H1 (cell line): ENCODE measurements at regions of chr5 and their contacts with region 1.

Region 1: DNA sequence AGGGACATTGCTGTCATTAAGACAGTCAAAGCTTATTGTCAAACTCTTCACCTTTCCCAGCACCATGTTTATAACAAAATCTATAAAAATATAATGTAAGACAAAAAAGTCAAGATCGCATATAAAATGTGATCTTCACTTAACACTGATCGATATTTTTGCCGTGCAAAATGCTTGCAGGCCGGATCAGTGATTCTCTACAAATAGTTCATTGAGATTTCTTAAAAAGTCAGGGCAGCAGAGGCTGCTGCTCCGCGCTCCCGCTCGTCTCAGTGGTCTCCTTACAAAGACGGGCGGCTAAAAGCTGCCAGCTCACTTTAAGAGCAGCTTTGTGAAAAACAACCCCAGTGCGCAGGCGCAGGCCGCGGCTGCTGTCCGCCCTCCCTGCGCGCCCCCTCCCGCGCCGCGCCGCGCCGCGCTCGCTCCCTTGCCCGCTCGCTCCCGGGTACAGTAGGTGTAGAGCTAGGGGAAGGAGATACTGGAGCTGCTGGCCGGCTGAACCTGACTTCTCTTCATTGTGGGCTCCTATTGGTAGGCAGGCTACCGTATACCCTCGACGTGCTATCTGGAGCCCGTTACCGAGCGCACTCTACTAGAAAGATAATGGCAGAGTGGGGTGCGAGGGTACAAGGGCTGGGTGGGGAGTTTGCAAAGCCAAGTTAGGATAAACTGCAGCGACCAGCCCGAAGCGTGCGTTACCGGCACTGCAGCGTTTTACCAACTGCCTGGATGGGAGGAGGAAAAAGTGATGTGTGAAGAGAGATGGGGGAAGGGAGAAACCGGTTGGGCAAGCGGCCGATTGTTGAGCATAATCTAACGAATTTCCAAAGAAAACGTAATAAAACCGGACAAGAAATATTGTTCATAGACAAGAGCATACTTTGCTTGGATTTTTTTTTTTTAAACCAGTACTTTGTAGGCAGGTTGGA is at the start of gene ARRDC3:
- DNase-seq: peak; percentile 90 to 97
- H3K4me3 ChIP-seq: peak within 1 kb of the TSS; percentile 85 to 94 (median 90)
- H3K27ac ChIP-seq: peak within 1 kb of the TSS; percentile 93
- H3K4me1 ChIP-seq: no peaks in the 10 kb centered on the region; a peak in 2 of 7 replicates
- H3K27me3 ChIP-seq: no peaks in the 10 kb centered on the region
- CTCF ChIP-seq: 0 out of 4 replicates have a peak, but pooled peaks of 1 of the 3 experiments have one; percentile 9
- EP300 ChIP-seq: peak in 1 of 2 experiments; percentile 3; a peak in 1 of 3 replicates
- POLR2A ChIP-seq: peak; percentile 92 to 98
- RAD21 ChIP-seq: peak in 1 of 2 experiments; percentile 15; a peak in 1 of 4 replicates
- total RNA-seq, gene ARRDC3: 5.4 and 5.7 TPM in 2 replicates

Region 2: GRCh38 chr5:90932052-90932699 is 451.1 kb before region 1 on chr5:
- CTCF ChIA-PET with region 1: interaction called, 20 read pairs
- POLR2A ChIA-PET with region 1: interaction called, 7 read pairs
- DNase-seq: no peak
- H3K4me3 ChIP-seq: no peak overlapping the region
- H3K27ac ChIP-seq: no peak overlapping the region
- H3K4me1 ChIP-seq: peaks cover 0 to 4% (median 0%) of the 10 kb centered on the region in 4 experiments; a peak in 1 of 7 replicates
- H3K27me3 ChIP-seq: no peaks in the 10 kb centered on the region
- CTCF ChIP-seq: peak; percentile 11 to 77 (median 66)
- EP300 ChIP-seq: no peak
- POLR2A ChIP-seq: no peak
- RAD21 ChIP-seq: peak; percentile 85 to 86

Region 3: GRCh38 chr5:91194824-91195381 is 188.4 kb before region 1 on chr5:
- CTCF ChIA-PET with region 1: interaction called, 11 read pairs
- POLR2A ChIA-PET with region 1: interaction called, 4 read pairs
- DNase-seq: no peak
- H3K4me3 ChIP-seq: no peak overlapping the region
- H3K27ac ChIP-seq: no peak overlapping the region
- H3K4me1 ChIP-seq: no peaks in the 10 kb centered on the region
- H3K27me3 ChIP-seq: no peaks in the 10 kb centered on the region
- CTCF ChIP-seq: no peak
- EP300 ChIP-seq: no peak
- POLR2A ChIP-seq: no peak
- RAD21 ChIP-seq: no peak

Region 4: DNA sequence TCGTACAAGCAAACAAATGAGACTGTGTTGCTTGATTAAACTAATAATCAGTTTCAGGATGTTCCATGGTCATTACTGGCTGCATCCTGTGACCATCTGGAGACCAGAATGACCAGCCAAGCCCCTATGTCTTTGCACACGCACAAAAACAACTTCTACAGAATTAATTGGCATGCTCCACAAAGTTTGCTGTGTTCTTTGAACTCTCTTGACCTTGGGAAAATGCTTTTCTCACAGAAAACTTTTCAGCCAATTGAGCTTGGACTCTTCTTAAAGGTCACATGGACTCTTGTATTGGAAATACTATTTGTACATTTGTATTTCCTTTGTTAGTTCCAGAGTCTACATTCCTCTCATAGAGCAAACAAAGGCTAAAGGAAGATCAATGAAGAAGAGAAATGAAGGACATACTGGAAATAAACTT is 148.0 kb before region 1 on chr5:
- CTCF ChIA-PET with region 1: interaction called, 28 read pairs
- POLR2A ChIA-PET with region 1: interaction called, 12 read pairs
- DNase-seq: no peak
- H3K4me3 ChIP-seq: no peak overlapping the region
- H3K27ac ChIP-seq: no peak overlapping the region
- H3K4me1 ChIP-seq: no peaks in the 10 kb centered on the region
- H3K27me3 ChIP-seq: no peaks in the 10 kb centered on the region
- CTCF ChIP-seq: no peak
- EP300 ChIP-seq: no peak
- POLR2A ChIP-seq: no peak
- RAD21 ChIP-seq: no peak

Region 5: DNA sequence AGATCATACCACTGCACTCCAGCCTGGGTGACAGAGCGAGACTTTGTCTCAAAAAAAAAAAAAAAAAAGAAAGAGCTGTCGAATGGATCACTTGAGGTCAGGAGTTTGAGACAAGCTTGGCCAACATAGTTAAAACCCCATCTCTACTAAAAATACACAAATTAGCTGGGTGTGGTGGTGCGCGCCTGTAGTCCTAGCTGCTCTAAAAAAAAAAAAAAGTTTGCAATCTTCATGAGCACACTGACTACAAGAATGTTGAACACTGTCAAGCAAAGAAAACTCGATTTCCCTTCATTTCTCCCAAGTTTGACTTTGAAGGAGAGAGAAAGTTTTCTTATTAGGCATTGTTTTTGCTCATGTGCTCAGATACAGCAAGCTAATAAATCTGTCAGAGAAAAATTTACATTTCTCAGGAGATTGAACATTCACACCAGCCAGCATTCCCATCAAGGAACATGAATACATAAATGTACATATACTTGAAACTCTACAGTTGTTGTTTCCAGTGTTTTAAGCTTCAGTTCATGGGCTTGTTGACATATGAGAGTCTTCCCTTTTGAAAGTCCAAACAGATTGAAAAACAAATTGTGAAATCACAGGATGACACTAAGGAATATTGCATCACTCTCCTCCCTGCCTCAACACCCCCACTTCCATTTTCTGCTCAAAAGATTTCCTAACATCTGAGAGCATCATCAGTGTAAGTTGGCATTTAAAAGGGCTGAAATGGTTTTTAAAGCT is 82.0 kb before region 1 on chr5:
- CTCF ChIA-PET with region 1: interaction called, 19 read pairs
- POLR2A ChIA-PET with region 1: interaction called, 6 read pairs
- DNase-seq: no peak
- H3K4me3 ChIP-seq: no peak overlapping the region
- H3K27ac ChIP-seq: no peak overlapping the region
- H3K4me1 ChIP-seq: no peaks in the 10 kb centered on the region
- H3K27me3 ChIP-seq: no peaks in the 10 kb centered on the region
- CTCF ChIP-seq: no peak
- EP300 ChIP-seq: no peak
- POLR2A ChIP-seq: no peak
- RAD21 ChIP-seq: no peak

Region 6: GRCh38 chr5:91403438-91403837 is 20.1 kb after region 1 on chr5:
- CTCF ChIA-PET with region 1: interaction called, 51 read pairs
- POLR2A ChIA-PET with region 1: interaction called, 7 read pairs
- DNase-seq: no peak
- H3K4me3 ChIP-seq: no peak overlapping the region
- H3K27ac ChIP-seq: no peak overlapping the region
- H3K4me1 ChIP-seq: peaks cover 0 to 5% (median 3%) of the 10 kb centered on the region in 4 experiments; a peak in 2 of 7 replicates
- H3K27me3 ChIP-seq: no peaks in the 10 kb centered on the region
- CTCF ChIP-seq: no peak
- EP300 ChIP-seq: no peak
- POLR2A ChIP-seq: no peak
- RAD21 ChIP-seq: no peak

Region 7: GRCh38 chr5:91449083-91449482 is 65.8 kb after region 1 on chr5:
- CTCF ChIA-PET with region 1: no interaction called
- POLR2A ChIA-PET with region 1: no interaction called
- DNase-seq: no peak
- H3K4me3 ChIP-seq: no peak overlapping the region
- H3K27ac ChIP-seq: no peak overlapping the region
- H3K4me1 ChIP-seq: peaks cover 0 to under 1% (median 0%) of the 10 kb centered on the region in 4 experiments; a peak in 1 of 7 replicates
- H3K27me3 ChIP-seq: no peaks in the 10 kb centered on the region; a peak in 1 of 7 replicates
- CTCF ChIP-seq: no peak
- EP300 ChIP-seq: no peak
- POLR2A ChIP-seq: no peak
- RAD21 ChIP-seq: no peak

Region 8: GRCh38 chr5:91499943-91500531 is 116.7 kb after region 1 on chr5:
- CTCF ChIA-PET with region 1: no interaction called
- POLR2A ChIA-PET with region 1: no interaction called
- DNase-seq: no peak
- H3K4me3 ChIP-seq: no peak overlapping the region
- H3K27ac ChIP-seq: no peak overlapping the region
- H3K4me1 ChIP-seq: no peaks in the 10 kb centered on the region; a peak in 1 of 7 replicates
- H3K27me3 ChIP-seq: no peaks in the 10 kb centered on the region
- CTCF ChIP-seq: peak in 2 of 3 experiments; percentile 28 to 55; a peak in 2 of 4 replicates
- EP300 ChIP-seq: no peak
- POLR2A ChIP-seq: no peak
- RAD21 ChIP-seq: peak; percentile 76 to 83